ENCODE measurements at regions of chr16 and their contacts with region 1.

Region 1: GRCh38 chr16:66830422-66831404 is at the start of gene NAE1:
- DNase-seq: peak; percentile 89
- ATAC-seq: peak; percentile 96
- H3K4me3 ChIP-seq: peak within 1 kb of the TSS; percentile 77
- H3K27ac ChIP-seq: no peak within 1 kb of the TSS
- H3K4me1 ChIP-seq: peaks cover 15% of the 10 kb centered on the region
- H3K27me3 ChIP-seq: no peaks in the 10 kb centered on the region
- CTCF ChIP-seq: peak; percentile 85
- total RNA-seq, gene NAE1: 55.1 and 82.3 TPM in 2 replicates

Region 2: DNA sequence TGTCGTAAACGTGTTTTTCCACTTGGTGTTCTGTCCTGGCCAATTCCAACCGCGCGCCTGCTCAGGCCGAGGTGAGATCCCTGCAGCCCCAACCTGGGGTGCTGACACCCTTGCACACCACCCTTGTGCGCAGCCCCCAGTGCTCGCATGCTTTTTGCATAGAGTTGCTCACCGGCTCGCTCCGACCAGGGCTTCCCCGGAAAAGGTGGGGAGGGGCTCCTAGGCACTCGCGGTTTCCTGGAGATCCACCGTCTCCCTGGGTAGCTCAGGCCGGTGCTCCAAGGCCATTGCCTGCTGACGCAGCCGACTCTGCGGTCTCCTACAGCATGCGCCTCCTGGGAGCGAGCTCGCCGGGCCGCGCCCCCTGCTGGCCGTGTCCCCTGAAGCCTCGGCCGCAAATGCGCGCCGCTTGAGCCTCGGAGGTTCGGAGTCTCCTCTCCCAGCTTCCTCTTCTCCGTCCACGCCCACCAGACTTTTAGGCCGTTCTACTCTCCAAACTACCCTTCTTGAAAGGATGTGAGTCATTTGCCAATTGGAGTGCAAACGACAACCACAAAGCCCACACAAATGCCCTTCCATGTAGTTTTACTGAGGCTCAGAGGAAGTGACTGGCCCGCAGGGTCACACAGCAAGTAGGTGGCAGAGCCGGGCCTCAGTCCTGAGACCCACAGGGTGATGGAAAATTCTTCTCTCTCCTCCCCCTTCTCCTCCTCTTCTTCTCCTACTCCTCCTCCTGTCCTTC is 42.4 kb after region 1 on chr16:
- CTCF ChIA-PET with region 1: interaction called, 25 read pairs
- POLR2A ChIA-PET with region 1: interaction called, 24 read pairs
- intact Hi-C with region 1: loop called (anchors 2 kb)
- DNase-seq: peak; percentile 98
- ATAC-seq: peak; percentile 94
- H3K4me3 ChIP-seq: peak overlapping the region; percentile 63
- H3K27ac ChIP-seq: peak overlapping the region; percentile 66
- H3K4me1 ChIP-seq: peaks cover 9% of the 10 kb centered on the region
- H3K27me3 ChIP-seq: no peaks in the 10 kb centered on the region
- CTCF ChIP-seq: peak; percentile 87

Region 3: DNA sequence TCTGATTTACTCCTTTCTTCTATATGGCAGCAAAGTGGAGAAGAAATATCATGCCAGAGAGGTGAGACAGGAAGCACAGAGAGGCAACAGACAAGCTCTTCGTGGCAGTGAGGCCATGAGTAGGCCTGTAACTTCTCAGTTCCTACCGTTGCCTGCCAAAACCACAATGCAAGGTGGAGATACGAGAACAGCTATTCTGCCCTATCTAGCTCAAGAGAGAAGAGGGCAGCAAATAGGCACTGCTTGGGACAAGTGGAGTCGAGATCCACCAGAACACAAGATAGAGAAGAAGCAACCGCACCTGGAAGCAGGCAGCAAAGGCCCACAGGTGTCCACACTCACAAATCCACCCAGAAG is 950.8 kb after region 1 on chr16:
- CTCF ChIA-PET with region 1: no interaction called
- POLR2A ChIA-PET with region 1: interaction called, 11 read pairs
- intact Hi-C with region 1: no loop called
- DNase-seq: no peak
- ATAC-seq: no peak
- H3K4me3 ChIP-seq: no peak overlapping the region
- H3K27ac ChIP-seq: no peak overlapping the region
- H3K4me1 ChIP-seq: no peaks in the 10 kb centered on the region
- H3K27me3 ChIP-seq: no peaks in the 10 kb centered on the region
- CTCF ChIP-seq: no peak